Activated CD4-positive, alpha-beta memory T cell treated with anti-CD3 and anti-CD28 coated beads for 36 hours (primary cell): ENCODE measurements at regions of chr2 and their contacts with region 1.

Region 1: DNA sequence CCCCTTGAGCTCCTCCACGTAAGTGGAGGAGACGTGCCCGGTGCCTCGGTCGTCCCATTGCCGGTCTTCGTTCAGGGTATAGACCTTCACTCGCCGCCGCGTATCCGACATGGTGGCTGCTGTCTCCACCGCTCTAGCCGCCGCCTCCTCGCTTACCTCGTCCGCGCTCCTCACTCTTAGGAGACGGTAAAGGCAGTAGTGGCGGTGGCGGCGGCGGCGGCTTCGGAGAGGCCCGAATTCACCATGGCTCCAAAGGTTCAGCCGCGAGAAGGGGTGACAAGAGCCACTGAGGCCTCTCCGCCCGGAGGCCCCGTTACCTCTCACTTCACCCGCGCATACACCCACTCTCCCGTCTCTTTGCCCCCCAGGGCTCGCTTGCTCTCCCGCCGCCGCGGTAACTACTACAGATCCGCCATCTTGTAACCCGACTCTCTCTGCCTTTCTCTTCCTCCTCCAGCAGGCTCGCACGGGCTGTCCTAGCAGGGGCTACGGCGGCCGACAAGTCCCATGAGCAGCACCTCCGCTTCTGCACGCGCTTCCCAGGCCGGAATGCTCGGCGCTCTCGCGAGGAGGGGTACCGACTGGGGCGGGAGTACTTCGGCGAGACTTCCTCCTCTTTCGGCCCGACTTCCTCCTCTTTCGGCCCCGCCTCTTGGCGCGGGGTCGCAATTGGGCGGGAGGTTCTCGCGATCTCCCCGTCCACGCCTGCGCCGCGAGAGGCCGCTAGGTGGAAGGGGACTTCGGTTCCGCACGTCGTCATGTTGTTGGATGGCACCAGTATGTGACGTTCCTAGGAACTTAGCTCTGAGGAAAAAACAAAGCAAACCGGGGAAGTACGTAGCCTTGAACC is at the start of gene PPP4R3B:
- DNase-seq: peak; percentile 99
- H3K4me3 Mint-ChIP-seq: no peak within 1 kb of the TSS
- H3K27ac Mint-ChIP-seq: no peak within 1 kb of the TSS
- H3K4me1 Mint-ChIP-seq: peaks cover 47% of the 10 kb centered on the region
- H3K27me3 Mint-ChIP-seq: no peaks in the 10 kb centered on the region
- total RNA-seq, gene PPP4R3B: 62.4 to 65.1 TPM

Region 2: DNA sequence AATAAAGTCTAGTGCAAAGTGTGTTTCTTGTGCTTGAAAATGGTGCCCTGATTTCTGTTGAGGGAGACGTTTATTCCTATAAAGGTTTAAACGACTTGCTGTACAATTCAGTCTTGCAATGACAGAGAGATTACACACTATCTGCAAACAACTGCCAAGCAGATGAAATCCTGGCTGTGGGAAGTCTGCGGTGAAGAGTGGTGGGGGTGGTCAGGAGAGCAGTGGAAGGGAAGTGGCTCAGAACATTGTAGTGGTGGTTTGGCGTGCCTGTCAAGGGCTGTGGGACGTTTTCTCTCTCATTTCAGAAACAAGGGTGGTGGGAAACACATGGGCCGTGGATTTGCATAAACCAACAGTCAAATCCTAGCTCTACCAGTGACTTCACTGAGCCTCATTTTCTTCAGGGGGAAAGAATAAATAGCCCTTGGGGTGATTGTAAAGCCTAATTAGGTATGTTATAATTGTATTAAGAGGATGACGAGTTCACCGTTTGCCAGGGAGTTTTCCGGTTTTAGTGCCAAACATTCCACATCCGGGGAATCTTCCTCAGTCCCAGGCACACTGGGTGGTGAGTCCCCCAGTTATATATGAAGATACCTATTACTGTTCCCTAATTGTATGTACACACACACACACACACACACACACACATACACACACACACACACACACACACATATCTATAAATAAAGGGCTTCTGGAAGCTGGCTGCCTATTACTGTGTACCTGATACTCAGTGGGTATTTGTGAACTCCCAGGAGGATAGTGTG is 1046.3 kb before region 1 on chr2:
- CTCF ChIA-PET with region 1: no interaction called
- POLR2A ChIA-PET with region 1: no interaction called
- intact Hi-C with region 1: loop called (anchors 5 kb)
- DNase-seq: peak; percentile 93
- H3K4me3 Mint-ChIP-seq: peak overlapping the region; percentile 36
- H3K27ac Mint-ChIP-seq: peak overlapping the region; percentile 96
- H3K4me1 Mint-ChIP-seq: peaks cover 85% of the 10 kb centered on the region
- H3K27me3 Mint-ChIP-seq: no peaks in the 10 kb centered on the region

Region 3: GRCh38 chr2:55268907-55269644 is 348.3 kb before region 1 on chr2 and contains the start of gene MTIF2:
- CTCF ChIA-PET with region 1: no interaction called
- POLR2A ChIA-PET with region 1: no interaction called
- intact Hi-C with region 1: loop called (anchors 10 kb)
- DNase-seq: peak; percentile 95
- H3K4me3 Mint-ChIP-seq: peak within 1 kb of the TSS; percentile 93
- H3K27ac Mint-ChIP-seq: peak within 1 kb of the TSS; percentile 88
- H3K4me1 Mint-ChIP-seq: peaks cover 7% of the 10 kb centered on the region
- H3K27me3 Mint-ChIP-seq: peaks cover 2% of the 10 kb centered on the region
- total RNA-seq, gene MTIF2: 42.7 to 43.2 TPM

Region 4: DNA sequence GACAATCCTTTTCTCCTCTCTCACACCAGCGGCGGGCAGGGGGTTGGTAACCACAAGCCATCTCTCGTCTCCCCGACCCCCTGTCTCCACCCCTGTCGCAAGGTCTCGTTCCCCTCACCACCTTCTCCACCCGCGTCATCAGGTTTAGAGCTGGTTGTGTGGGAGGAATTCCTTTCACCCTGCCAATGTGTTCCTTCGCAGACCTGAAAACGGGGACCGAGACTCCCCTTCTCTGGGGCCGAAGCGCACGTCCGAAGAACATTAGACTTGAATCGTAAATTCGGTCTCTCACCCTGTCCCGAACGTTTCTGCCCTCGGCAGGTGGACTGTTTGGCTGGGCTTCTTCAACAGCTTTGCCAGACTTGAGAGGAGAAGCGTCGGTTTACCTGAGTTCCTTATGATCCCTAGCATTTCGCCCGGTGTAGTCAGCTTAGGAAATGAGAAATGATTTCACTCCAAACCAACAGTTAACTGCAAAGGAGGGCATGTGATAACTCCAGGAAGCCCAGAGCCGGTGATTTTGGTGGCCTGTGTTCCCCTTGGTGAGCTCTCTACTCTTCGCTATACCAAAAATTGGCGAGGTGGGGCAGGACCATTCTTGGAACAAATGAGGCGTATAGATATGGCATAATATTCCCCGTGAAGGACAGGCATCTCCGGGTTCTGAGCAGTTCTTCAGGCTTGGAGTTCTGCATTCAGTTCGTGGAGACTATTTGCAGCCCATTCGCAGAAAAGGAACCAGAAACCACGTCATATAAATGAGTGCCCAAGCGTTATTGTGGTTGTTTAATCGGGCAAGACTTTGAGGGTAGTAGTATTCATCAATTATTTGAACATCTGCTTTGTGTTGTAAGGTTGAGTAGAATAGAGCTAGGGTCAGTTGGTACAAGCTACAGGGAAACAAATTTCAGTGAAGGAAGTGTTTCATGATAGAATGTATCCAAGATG is 97.2 kb before region 1 on chr2:
- CTCF ChIA-PET with region 1: interaction called, 6 read pairs
- POLR2A ChIA-PET with region 1: interaction called, 6 read pairs
- intact Hi-C with region 1: loop called (anchors 1 kb)
- DNase-seq: peak; percentile 55
- H3K4me3 Mint-ChIP-seq: peak overlapping the region; percentile 99
- H3K27ac Mint-ChIP-seq: peak overlapping the region; percentile 95
- H3K4me1 Mint-ChIP-seq: peaks cover 9% of the 10 kb centered on the region
- H3K27me3 Mint-ChIP-seq: no peaks in the 10 kb centered on the region

Region 5: DNA sequence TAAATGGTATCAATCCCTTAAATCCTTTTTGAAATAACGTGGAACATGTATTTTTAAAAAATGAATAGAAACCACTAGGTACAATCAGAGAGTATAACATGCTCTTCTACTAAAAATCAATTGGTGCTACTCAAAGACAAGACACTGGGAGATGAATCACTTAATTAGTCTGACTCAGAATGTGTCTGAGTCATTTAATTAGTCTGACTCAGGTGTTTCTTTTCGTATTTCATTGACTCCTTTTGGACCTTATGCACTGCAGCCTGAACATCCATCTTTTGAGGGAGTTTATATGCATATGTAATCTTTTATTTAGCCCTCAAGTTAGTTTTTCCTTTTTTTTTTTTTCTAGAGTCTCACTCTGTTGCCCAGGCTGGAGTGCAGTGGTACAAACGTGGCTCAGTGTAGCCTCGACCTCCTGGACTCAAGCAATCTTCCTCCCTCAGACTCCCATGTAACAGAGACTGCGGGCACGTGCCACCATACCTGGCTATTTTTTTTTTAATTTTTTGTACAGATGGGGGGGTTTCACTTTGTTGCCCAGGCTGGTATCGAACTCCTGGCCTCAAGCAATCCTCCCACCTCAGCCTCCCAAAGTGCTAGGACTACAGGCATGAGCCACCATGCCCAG is 26.5 kb before region 1 on chr2:
- CTCF ChIA-PET with region 1: interaction called, 4 read pairs
- POLR2A ChIA-PET with region 1: no interaction called
- intact Hi-C with region 1: loop called (anchors 1 kb)
- DNase-seq: no peak
- H3K4me3 Mint-ChIP-seq: no peak overlapping the region
- H3K27ac Mint-ChIP-seq: peak overlapping the region; percentile 33
- H3K4me1 Mint-ChIP-seq: peaks cover 32% of the 10 kb centered on the region
- H3K27me3 Mint-ChIP-seq: no peaks in the 10 kb centered on the region

Region 6: GRCh38 chr2:56334622-56335021 is 717.2 kb after region 1 on chr2:
- CTCF ChIA-PET with region 1: no interaction called
- POLR2A ChIA-PET with region 1: no interaction called
- intact Hi-C with region 1: no loop called
- DNase-seq: no peak
- H3K4me3 Mint-ChIP-seq: no peak overlapping the region
- H3K27ac Mint-ChIP-seq: no peak overlapping the region
- H3K4me1 Mint-ChIP-seq: no peaks in the 10 kb centered on the region
- H3K27me3 Mint-ChIP-seq: no peaks in the 10 kb centered on the region